IMR-90 (cell line): ENCODE measurements at regions of chr4 and their contacts with region 1.

Region 1: DNA sequence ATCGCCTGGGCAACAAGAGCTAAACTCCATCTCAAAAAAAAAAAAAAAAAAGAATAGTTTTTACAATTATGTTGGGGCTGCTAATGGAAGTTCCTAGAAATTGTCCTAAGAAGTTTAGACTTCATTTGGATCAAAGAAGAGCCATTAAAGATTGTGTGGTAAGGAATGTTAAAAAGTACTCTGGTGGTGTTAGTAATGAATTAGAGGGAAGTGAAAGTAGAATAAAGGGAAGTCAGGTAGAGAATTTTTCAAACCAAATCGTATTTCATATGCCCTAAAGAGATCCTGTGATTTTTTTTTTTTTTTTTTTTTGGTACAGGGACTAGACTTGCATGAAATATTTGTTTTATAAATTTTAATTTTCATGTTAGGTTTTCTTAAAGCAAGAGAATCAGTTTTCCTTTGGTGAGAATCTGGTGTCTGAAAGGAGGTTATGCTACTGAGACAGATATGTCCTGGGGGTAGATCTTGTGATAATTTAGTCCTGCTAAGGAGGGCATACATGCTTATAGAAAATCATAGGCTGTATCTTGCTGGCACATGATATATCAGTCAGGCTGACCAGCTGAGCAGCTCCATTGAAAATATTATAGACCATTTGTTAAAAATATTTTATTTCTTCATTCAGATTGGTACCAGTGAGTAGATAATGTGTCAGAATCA is 10.7 kb downstream of the SEC24B start:
- DNase-seq: no peak
- ATAC-seq: no peak
- H3K4me3 ChIP-seq: no peak overlapping the region
- H3K27ac ChIP-seq: no peak overlapping the region
- H3K4me1 ChIP-seq: peaks cover 7% of the 10 kb centered on the region
- H3K27me3 ChIP-seq: no peaks in the 10 kb centered on the region
- CTCF ChIP-seq: no peak
- POLR2A ChIP-seq: no peak
- RAD21 ChIP-seq: no peak

Region 2: DNA sequence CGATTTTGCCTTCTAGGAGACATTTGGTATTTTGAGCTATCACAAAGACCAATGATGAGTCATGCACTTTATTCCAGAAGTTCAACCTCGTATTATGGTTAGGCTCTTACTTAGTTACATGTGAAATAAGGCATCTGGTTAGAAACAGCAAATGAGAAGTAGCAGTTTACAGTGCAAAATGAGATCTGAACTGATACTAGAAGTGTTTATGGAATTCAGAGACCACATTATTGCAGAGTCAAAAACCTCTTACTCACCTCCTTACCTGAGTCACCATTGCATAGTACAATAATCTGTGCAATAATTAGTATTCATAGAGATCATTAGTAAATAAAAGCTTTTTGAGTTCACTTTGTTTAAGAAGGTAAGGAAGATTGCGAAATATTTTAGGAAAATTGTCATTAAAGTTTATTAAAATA is 28.0 kb after region 1 on chr4:
- CTCF ChIA-PET with region 1: no interaction called
- POLR2A ChIA-PET with region 1: no interaction called
- dilution Hi-C with region 1: no loop called
- in situ Hi-C with region 1: no loop called
- intact Hi-C with region 1: no loop called
- DNase-seq: peak; percentile 84
- ATAC-seq: peak; percentile 84
- H3K4me3 ChIP-seq: no peak overlapping the region
- H3K27ac ChIP-seq: no peak overlapping the region
- H3K4me1 ChIP-seq: peaks cover 5% of the 10 kb centered on the region
- H3K27me3 ChIP-seq: no peaks in the 10 kb centered on the region
- CTCF ChIP-seq: no peak
- POLR2A ChIP-seq: no peak
- RAD21 ChIP-seq: no peak

Region 3: DNA sequence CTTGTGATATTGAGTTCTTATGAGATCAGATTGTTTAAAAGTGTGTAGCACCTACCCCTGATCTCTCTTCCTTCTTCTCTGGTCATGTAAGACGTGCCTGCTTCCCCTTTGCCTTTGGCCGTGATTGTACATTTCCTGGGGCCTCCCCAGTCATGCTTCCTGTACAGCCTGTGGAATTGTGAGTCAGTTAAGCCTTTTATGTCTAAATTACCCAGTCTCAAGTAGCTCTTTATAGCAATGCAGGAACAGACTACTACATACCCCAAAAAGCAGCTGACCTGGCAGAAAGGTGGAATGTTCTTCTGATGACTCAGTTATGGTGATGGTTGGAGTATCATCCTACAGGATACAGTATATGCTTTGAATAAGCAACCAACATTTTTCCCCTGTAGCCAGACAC is 104.3 kb after region 1 on chr4:
- CTCF ChIA-PET with region 1: no interaction called
- POLR2A ChIA-PET with region 1: no interaction called
- dilution Hi-C with region 1: no loop called
- in situ Hi-C with region 1: no loop called
- intact Hi-C with region 1: loop called (anchors 5 kb)
- DNase-seq: peak; percentile 92
- ATAC-seq: peak; percentile 88
- H3K4me3 ChIP-seq: no peak overlapping the region
- H3K27ac ChIP-seq: no peak overlapping the region
- H3K4me1 ChIP-seq: peaks cover 2% of the 10 kb centered on the region; the same call in 1 of the 2 replicates
- H3K27me3 ChIP-seq: no peaks in the 10 kb centered on the region
- CTCF ChIP-seq: no peak
- POLR2A ChIP-seq: no peak
- RAD21 ChIP-seq: no peak